OCI-LY7 (cell line): ENCODE measurements at regions of chr4 and their contacts with region 1.

Region 1: DNA sequence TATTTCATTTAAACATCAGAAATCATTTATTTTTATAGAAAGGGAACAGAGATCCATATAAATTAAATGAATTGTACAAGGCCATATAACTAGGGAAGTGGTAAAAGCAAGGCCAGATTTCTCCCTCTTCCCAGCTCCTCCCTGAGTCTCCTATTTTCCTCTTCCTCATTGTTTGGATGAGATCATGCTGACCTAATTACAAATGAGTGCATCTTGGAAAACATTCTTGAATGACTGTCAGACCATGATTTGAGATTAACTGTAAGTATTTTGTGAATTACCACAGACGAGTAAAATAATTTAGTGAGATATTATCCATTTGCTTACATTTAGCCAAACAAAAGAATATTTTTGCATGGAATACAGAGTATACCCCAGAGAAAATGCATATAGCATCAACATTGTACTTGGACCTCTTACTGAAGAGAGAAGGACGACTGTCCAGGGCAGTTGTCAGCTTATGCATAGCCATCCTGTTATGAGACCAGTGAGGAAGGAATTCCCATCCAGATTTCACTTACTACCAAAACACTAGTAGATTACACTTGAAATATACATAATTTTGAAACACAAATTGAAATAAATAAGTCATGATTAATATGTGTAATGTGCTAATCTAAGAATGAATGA is 47.3 kb downstream of the SLAIN2 start:
- DNase-seq: no peak
- H3K4me3 ChIP-seq: no peak overlapping the region
- H3K27ac ChIP-seq: no peak overlapping the region
- H3K4me1 ChIP-seq: no peaks in the 10 kb centered on the region
- CTCF ChIP-seq: no peak

Region 2: DNA sequence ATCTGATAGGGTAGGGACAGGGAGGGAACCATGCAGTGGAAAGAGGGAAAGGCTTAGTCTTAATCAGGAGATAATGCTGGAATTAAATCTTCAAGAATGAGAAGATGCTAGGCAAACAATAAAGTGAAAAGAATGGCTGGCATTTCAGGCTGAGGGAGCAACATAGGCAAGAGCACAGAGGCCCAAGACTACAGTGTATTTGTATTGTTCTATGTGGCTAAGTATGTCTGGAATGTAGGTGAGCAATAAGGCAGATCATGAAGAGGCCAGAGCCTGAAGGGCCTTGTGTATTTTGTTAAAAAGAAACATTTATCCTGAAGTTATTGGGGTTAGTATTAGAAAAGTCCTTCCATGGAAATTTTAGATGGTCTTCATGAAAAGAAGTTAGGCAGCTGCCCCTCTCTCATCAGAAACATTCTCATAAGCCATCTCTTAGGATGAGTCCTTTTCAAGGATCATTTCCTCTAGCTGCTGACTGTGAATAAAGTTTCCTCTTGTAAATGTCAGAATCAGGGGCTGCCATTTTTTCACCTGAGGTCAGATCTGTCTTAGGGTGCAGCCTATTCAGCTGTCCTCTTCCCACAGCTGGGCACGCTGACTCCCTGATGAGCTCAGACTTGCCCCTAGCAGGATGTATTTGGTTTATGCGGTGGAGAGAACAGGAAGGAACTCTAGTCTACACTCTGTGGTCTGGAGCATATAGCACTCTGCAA is 857.2 kb before region 1 on chr4:
- CTCF ChIA-PET with region 1: no interaction called
- POLR2A ChIA-PET with region 1: no interaction called
- intact Hi-C with region 1: no loop called
- DNase-seq: no peak
- H3K4me3 ChIP-seq: no peak overlapping the region
- H3K27ac ChIP-seq: no peak overlapping the region
- H3K4me1 ChIP-seq: no peaks in the 10 kb centered on the region
- CTCF ChIP-seq: no peak

Region 3: GRCh38 chr4:47733302-47734175 is 655.1 kb before region 1 on chr4:
- CTCF ChIA-PET with region 1: no interaction called
- POLR2A ChIA-PET with region 1: no interaction called
- intact Hi-C with region 1: no loop called
- DNase-seq: no peak
- H3K4me3 ChIP-seq: no peak overlapping the region
- H3K27ac ChIP-seq: no peak overlapping the region
- H3K4me1 ChIP-seq: no peaks in the 10 kb centered on the region
- CTCF ChIP-seq: no peak

Region 4: DNA sequence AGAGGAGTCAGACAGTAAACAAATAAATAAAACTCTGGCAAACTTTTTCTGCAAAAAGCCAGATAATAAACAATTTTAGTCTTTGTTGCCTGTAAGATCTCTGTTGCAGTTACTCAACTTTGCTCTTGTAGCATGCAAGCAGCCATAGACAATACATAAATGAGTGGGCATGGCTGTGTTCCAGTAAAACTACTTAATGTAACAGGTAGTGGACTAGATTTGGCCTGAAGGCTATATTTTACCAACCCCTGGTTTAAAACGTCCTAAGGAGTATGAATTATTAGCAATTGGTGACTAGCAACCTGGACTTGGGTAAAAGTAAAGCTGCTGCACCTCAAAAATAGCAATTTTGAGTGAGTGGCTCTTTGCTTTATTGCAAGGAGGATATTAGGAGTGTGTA is 16.4 kb before region 1 on chr4:
- CTCF ChIA-PET with region 1: no interaction called
- POLR2A ChIA-PET with region 1: interaction called, 13 read pairs
- intact Hi-C with region 1: no loop called
- DNase-seq: no peak
- H3K4me3 ChIP-seq: no peak overlapping the region
- H3K27ac ChIP-seq: no peak overlapping the region
- H3K4me1 ChIP-seq: peaks cover 7% of the 10 kb centered on the region
- CTCF ChIP-seq: no peak